PC-9 (cell line): ENCODE measurements at regions of chr16 and their contacts with region 1.

Region 1: DNA sequence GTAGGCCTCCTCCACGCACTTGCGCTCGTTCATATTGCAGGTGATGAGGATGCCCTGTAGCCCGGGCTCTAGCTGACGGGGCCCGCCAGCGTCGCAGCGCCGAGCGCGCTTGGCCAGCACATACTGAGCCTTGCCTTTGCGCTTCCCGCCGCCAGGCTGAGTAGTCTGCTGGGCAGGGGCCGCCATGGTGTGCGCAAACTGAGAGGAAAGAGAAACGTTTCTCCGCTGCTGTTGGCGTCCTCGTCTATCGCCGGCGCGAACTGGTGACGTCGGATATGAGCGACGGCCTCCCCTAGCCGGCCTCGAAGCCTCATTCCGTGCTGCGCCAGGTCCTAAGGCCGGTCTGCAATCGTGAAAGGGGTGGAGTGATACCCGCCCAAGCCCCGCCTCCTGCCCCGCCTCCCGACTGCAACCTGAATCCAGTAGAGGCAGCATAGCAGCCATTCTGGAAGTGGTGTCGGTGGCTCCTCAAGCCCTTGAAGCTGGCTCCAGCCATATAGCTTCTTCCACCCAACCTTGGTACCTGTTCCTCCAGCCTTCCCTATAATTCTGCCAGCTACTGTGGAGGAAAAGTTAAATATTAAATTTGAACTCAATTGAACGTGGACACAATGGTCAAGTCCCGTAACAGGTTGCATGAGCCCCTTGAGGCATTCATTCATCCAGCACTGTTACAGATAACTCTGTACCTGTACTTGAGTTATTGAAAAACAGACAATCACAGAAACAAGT is at the start of gene THUMPD1:
- DNase-seq: peak; percentile 86 to 94
- H3K4me3 ChIP-seq: peak within 1 kb of the TSS; percentile 89
- H3K27ac ChIP-seq: peak within 1 kb of the TSS; percentile 70
- H3K4me1 ChIP-seq: peaks cover 17% of the 10 kb centered on the region; the same call in 1 of the 2 replicates
- H3K27me3 ChIP-seq: no peaks in the 10 kb centered on the region
- CTCF ChIP-seq: no peak
- total RNA-seq, gene THUMPD1: 35.0 and 36.0 TPM in 2 replicates

Region 2: DNA sequence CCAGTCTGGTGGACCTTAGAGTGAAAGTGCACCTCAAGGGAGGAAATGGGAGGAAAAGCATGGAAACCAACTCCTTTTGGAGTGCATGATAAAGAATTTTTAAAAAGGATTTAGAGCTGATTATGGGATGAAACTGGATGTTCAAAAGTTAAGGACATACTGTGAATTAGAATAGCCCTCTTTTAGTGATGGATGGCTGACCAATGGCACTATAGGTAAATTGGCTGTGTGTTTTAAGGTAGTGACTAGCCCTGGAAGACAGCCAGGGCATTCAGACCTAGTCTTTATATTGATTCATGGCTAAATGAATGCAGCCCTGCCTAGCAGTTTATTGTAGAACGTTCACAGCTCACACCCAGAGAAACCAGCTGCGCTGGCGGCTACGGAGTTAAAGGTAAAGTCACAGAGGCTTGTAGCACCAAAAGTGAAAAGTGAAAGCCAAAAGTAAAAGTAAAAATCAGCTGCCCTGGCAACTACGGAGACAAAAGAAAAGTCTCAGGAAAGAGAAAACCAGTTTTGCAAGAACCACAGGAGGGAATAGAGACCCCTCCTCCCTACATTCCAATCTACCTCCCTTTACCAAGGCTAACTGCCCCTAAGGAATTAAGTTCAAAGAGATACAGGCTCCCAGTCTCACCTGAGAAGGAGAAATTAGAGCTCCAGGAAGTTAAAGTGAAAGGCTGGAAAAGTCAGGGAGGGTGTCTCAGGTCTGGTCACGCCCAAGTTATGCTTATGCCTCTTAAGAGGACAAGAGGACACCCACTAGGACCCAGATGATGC is 66.0 kb before region 1 on chr16:
- CTCF ChIA-PET with region 1: interaction called, 7 read pairs
- POLR2A ChIA-PET with region 1: no interaction called
- intact Hi-C with region 1: loop called (anchors 1 kb)
- DNase-seq: peak; percentile 76 to 95
- H3K4me3 ChIP-seq: peak overlapping the region; percentile 47; the same call in 1 of the 2 replicates
- H3K27ac ChIP-seq: peak overlapping the region; percentile 45
- H3K4me1 ChIP-seq: peaks cover 36% of the 10 kb centered on the region
- H3K27me3 ChIP-seq: no peaks in the 10 kb centered on the region
- CTCF ChIP-seq: no peak

Region 3: GRCh38 chr16:20806168-20807050 is 64.7 kb after region 1 on chr16 and contains the starts of genes ERI2 and REXO5:
- CTCF ChIA-PET with region 1: no interaction called
- POLR2A ChIA-PET with region 1: no interaction called
- intact Hi-C with region 1: loop called (anchors 1 kb)
- DNase-seq: peak; percentile 89 to 96
- H3K4me3 ChIP-seq: peak within 1 kb of the TSS; percentile 77
- H3K27ac ChIP-seq: peak within 1 kb of the TSS; percentile 47
- H3K4me1 ChIP-seq: peaks cover 10% of the 10 kb centered on the region; the same call in 1 of the 2 replicates
- H3K27me3 ChIP-seq: no peaks in the 10 kb centered on the region
- CTCF ChIP-seq: peak; percentile 53
- total RNA-seq, gene ERI2: 25.6 and 29.5 TPM in 2 replicates
- total RNA-seq, gene REXO5: 9.5 and 13.2 TPM in 2 replicates